HEK293T (cell line): ENCODE measurements at regions of chr17 and their contacts with region 1.

Region 1: DNA sequence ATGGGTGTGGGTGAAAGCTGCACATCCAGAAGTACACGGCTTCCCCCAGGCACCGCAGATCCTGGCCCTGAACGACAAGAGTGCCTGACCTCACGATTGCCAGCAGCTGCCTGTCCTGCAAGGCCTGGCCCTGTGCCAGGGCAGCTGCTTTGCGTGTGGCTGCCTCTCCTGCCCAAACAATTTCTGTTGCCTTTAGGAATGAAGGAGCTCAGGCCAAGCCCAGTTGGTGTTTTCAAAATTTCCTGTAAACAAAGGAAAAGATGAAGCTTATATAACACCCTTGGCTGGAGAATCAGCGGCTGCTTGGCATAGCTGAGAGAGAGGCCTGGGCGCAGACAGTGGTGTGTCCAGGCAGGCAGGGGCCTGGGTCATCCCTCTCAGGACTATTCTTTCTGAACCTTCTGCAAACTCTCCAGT is 11.7 kb upstream of the SLC47A2 start:
- DNase-seq: no peak

Region 2: DNA sequence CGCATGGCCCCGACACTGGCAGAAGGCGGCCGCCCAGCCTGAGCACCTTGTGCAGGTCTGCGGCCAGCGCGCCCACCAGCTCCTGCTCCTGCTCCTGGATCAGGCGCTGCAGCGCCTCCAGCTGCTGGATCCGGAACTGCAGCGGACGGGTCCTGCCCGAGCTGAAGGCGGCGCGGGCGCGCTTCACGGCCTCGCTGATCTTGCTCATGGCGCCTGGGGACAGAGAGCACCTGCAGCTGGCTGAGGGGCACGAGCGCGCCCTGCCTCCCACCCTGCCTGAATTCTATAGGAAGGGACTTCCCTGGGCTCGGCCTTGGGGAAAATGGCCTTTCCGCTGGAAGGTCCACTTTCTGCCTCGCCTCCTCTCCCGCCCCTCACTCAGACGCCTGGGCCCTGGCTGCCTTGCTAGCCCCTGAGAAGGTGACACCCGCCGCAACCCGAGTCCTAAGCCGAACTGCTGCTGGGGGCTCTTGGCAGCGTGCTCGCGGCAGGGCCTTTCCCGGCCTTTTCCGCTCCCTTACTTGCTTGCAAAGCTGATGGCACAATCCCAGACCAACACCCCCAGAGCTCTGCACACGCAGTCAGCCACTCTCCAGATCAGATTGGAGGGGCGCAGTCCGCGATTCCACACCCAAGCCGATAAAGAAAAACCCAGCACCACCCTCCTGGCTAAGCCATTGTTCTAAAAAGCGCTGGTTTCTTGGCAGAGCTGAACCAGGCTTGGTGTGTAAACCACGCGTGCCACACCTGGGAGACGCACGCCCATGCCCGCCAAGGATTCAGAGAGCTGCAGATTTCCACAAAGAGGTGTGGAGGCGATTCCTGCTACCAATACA is 17.1 kb after region 1 on chr17:
- CTCF ChIA-PET with region 1: interaction called, 16 read pairs
- POLR2A ChIA-PET with region 1: interaction called, 11 read pairs
- DNase-seq: peak; percentile 91